Adrenal gland (tissue), 19 donors: ENCODE measurements at regions of chr20 and their contacts with region 1.

Region 1: GRCh38 chr20:32429745-32430360 is 71.7 kb downstream of the ASXL1 start:
- DNase-seq: no peak
- H3K4me3 ChIP-seq: no peak overlapping the region
- H3K27ac ChIP-seq: no peak overlapping the region
- H3K4me1 ChIP-seq: no peaks in the 10 kb centered on the region
- H3K27me3 ChIP-seq: no peaks in the 10 kb centered on the region
- CTCF ChIP-seq: no peak
- POLR2A ChIP-seq: no peak

Region 2: GRCh38 chr20:32378461-32378860 is 51.4 kb before region 1 on chr20:
- intact Hi-C with region 1: loop called (anchors 10 kb)
- DNase-seq: no peak
- H3K4me3 ChIP-seq: no peak overlapping the region
- H3K27ac ChIP-seq: peak overlapping the region in 1 of 5 donors; percentile 31
- H3K4me1 ChIP-seq: no peaks in the 10 kb centered on the region
- H3K27me3 ChIP-seq: no peaks in the 10 kb centered on the region
- CTCF ChIP-seq: no peak
- POLR2A ChIP-seq: no peak